Psoas muscle (tissue), 8 donors: ENCODE measurements at regions of chr10 and their contacts with region 1.

Region 1: DNA sequence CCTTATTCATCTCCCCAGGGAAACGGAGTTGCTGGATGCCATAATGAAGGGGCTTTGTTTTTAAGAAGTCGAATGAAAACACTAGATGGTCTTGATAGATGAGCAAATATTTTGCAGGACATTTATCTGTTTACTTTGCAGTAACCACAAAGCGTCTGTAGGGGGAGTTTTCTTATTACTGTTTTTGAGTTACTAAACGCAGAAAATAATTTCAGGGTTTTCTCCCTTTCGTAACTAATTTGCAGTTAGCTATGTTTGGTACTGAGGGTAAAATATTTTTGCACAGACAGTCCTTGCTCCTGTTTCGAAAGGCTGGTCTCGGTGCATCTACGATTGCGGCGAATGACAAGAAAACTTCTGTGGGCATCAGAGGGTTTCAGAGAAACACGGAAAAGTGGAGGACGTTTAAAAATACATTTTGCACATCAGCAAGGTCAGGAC is 505.6 kb upstream of the MKI67 start:
- DNase-seq: no peak
- ATAC-seq: no peak
- H3K4me3 ChIP-seq: no peak overlapping the region
- H3K27ac ChIP-seq: no peak overlapping the region
- H3K4me1 ChIP-seq: no peaks in the 10 kb centered on the region
- H3K27me3 ChIP-seq: no peaks in the 10 kb centered on the region
- CTCF ChIP-seq: peak; percentile 49

Region 2: GRCh38 chr10:128297709-128298378 is 334.0 kb before region 1 on chr10:
- intact Hi-C with region 1: no loop called
- DNase-seq: no peak
- ATAC-seq: peak in 1 of 4 donors; percentile 22
- H3K4me3 ChIP-seq: no peak overlapping the region
- H3K27ac ChIP-seq: no peak overlapping the region
- H3K4me1 ChIP-seq: no peaks in the 10 kb centered on the region
- H3K27me3 ChIP-seq: no peaks in the 10 kb centered on the region
- CTCF ChIP-seq: no peak

Region 3: GRCh38 chr10:128859738-128860386 is 228.0 kb after region 1 on chr10:
- intact Hi-C with region 1: loop called in 1 of 2 experiments (anchors 10 kb)
- DNase-seq: no peak
- ATAC-seq: no peak
- H3K4me3 ChIP-seq: no peak overlapping the region
- H3K27ac ChIP-seq: no peak overlapping the region
- H3K4me1 ChIP-seq: no peaks in the 10 kb centered on the region
- H3K27me3 ChIP-seq: no peaks in the 10 kb centered on the region
- CTCF ChIP-seq: peak; percentile 52

Region 4: GRCh38 chr10:128875956-128876736 is 244.3 kb after region 1 on chr10:
- intact Hi-C with region 1: loop called in 1 of 2 experiments (anchors 10 kb)
- DNase-seq: peak; percentile 59 to 64
- ATAC-seq: peak in 3 of 4 donors; percentile 51 to 74 (median 55)
- H3K4me3 ChIP-seq: no peak overlapping the region
- H3K27ac ChIP-seq: no peak overlapping the region
- H3K4me1 ChIP-seq: no peaks in the 10 kb centered on the region
- H3K27me3 ChIP-seq: peaks cover 0 to 3% (median 2%) of the 10 kb centered on the region in 3 donors
- CTCF ChIP-seq: no peak

Region 5: DNA sequence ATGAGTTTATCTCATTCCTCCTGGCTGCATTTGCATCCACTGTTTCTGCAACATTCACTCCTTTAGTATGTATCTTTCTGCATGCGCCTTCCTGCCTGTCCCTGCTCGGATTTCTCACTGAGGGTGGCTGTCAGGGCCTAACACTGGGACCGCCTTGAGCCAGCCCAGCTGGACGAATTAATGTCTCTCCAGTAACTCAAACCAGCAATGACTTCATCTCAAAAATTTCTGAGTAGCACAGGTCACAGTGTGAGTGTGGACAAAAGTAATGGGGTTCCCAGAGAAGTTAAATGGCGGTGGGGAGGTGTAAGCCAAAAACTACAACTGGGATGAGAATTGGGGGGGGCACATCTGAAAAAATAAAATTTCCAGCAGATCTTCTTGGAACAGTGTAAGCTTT is 391.3 kb after region 1 on chr10:
- intact Hi-C with region 1: loop called in 1 of 2 experiments (anchors 10 kb)
- DNase-seq: peak; percentile 30 to 72
- ATAC-seq: peak; percentile 37 to 70 (median 46)
- H3K4me3 ChIP-seq: no peak overlapping the region
- H3K27ac ChIP-seq: no peak overlapping the region
- H3K4me1 ChIP-seq: no peaks in the 10 kb centered on the region
- H3K27me3 ChIP-seq: peaks cover 0 to 25% (median 0%) of the 10 kb centered on the region in 3 donors
- CTCF ChIP-seq: no peak